Natural killer cell (primary cell): ENCODE measurements at regions of chr1 and their contacts with region 1.

Region 1: GRCh38 chr1:222171005-222171404 is 376.9 kb downstream of the HHIPL2 start:
- DNase-seq: peak in 1 of 2 donors; percentile 18
- ATAC-seq: peak; percentile 71 to 93 (median 89)
- H3K4me3 ChIP-seq: no peak overlapping the region
- H3K4me3 Mint-ChIP-seq: no peak overlapping the region
- H3K27ac ChIP-seq: no peak overlapping the region
- H3K27ac Mint-ChIP-seq: no peak overlapping the region
- H3K4me1 ChIP-seq: peaks cover 5% of the 10 kb centered on the region
- H3K4me1 Mint-ChIP-seq: peaks cover 0 to 5% of the 10 kb centered on the region in 2 donors
- H3K27me3 ChIP-seq: no peaks in the 10 kb centered on the region
- H3K27me3 Mint-ChIP-seq: peaks cover 11 to 13% of the 10 kb centered on the region in 2 donors
- CTCF ChIP-seq: peak; percentile 82

Region 2: GRCh38 chr1:221478050-221478949 is 692.7 kb before region 1 on chr1:
- intact Hi-C with region 1: loop called (anchors 1 kb)
- DNase-seq: peak; percentile 42 to 71
- ATAC-seq: peak; percentile 72 to 98 (median 91)
- H3K4me3 ChIP-seq: no peak overlapping the region
- H3K4me3 Mint-ChIP-seq: no peak overlapping the region
- H3K27ac ChIP-seq: no peak overlapping the region
- H3K27ac Mint-ChIP-seq: no peak overlapping the region
- H3K4me1 ChIP-seq: no peaks in the 10 kb centered on the region
- H3K4me1 Mint-ChIP-seq: no peaks in the 10 kb centered on the region
- H3K27me3 ChIP-seq: no peaks in the 10 kb centered on the region
- H3K27me3 Mint-ChIP-seq: peaks cover 4 to 12% of the 10 kb centered on the region in 2 donors
- CTCF ChIP-seq: peak; percentile 71

Region 3: DNA sequence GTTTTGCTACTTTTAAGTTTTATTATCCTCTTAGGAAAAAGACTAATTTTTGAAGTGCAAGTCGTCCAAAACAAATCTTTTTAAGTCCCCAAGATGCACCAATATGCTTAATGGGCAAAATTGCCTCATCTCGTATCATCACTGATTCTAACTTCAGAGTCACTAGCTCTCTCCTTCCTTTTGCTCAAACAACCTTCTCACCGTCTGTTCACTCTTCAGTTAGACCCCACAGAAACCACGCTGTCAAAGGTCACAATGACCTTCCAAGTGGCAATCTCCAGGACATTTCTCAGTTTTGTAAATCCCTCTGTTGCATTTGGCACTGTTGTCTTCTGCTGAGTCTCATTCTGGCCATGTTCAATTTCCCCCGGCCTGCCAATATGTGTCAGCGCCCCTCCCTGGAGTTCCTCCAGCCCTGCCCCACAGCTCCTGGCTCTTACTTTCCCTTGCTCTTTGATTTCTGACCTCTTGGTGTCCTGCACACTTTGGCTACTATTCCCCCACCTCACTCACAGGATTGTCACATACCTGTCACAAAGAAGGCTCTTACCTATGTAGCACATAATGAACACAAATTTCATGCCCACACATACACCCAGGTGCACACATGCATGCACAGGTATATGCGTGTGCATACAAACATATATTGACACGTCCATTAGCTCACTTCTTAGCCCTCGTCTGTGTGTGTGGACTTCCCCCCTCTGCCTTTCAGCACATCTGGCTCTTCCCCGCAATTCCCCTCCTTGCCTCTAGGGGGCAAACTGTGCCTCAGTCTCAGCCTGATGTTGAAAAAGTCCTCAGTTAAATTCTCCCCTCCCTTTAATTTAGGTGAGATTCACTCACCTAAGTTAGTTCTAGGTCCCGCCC is 75.2 kb before region 1 on chr1:
- intact Hi-C with region 1: loop called (anchors 1 kb)
- DNase-seq: peak; percentile 49 to 81
- ATAC-seq: peak; percentile 77 to 85 (median 80)
- H3K4me3 ChIP-seq: no peak overlapping the region
- H3K4me3 Mint-ChIP-seq: no peak overlapping the region
- H3K27ac ChIP-seq: no peak overlapping the region
- H3K27ac Mint-ChIP-seq: no peak overlapping the region
- H3K4me1 ChIP-seq: peaks cover 15% of the 10 kb centered on the region
- H3K4me1 Mint-ChIP-seq: no peaks in the 10 kb centered on the region
- H3K27me3 ChIP-seq: no peaks in the 10 kb centered on the region
- H3K27me3 Mint-ChIP-seq: peaks cover 0 to 12% of the 10 kb centered on the region in 2 donors
- CTCF ChIP-seq: peak; percentile 95

Region 4: DNA sequence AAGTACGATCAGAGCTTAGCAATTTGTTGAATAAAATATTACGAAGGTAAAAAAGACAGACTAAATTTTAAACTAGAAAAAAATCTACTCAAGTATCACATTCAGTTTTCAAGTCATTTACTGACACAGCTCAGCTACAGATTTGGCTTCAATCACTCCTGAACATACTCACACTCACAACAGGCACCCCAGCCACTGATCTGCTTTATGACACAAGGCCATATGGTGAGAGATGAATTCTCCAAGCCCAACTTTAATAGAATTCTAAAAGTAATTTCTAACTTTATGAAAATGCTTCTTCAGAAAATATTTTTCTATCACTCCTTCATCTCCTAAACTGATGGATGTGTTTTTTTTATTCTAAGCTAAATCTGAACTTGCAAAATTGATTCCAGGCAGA is 39.8 kb after region 1 on chr1:
- intact Hi-C with region 1: no loop called
- DNase-seq: no peak
- ATAC-seq: no peak
- H3K4me3 ChIP-seq: no peak overlapping the region
- H3K4me3 Mint-ChIP-seq: no peak overlapping the region
- H3K27ac ChIP-seq: no peak overlapping the region
- H3K27ac Mint-ChIP-seq: no peak overlapping the region
- H3K4me1 ChIP-seq: no peaks in the 10 kb centered on the region
- H3K4me1 Mint-ChIP-seq: no peaks in the 10 kb centered on the region
- H3K27me3 ChIP-seq: no peaks in the 10 kb centered on the region
- H3K27me3 Mint-ChIP-seq: peaks cover 12 to 40% of the 10 kb centered on the region in 2 donors
- CTCF ChIP-seq: no peak